IMR-90 (cell line): ENCODE measurements at regions of chr21 and their contacts with region 1.

Region 1: DNA sequence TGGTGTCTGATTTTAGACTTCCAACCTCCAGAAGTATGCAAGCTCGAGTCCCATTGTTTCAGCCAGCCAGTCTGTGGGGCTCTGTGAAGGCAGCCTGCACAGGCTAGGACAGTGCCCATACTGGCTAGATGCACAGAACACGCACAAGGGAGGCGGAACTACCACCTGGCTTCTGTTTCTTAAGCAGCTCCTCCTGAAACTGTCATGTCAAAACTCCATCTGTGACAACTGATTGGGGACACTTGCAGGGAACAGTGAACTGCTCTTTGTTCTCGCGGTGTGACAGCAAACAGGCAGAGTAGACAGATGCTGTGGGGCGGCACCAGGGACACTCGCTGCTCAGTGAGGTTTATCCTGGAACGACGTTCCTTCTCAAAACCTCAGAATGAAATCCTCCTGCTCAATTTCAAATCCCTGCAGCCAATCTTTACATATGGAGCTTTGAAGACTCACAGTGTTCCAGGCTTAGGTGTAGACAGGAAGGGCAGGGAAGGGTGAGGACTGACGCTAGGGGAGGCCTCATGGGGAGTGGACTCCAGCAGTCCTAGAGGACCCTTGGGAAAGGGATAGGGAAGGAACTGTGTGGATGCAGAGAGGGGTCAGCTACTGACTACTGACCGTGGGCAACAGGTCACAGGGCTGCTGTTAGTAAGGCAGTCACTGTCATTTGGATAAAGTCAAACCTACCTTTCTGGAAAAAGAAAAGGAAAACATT is 73.8 kb downstream of the ERG start:
- DNase-seq: no peak
- ATAC-seq: no peak
- H3K4me3 ChIP-seq: no peak overlapping the region
- H3K27ac ChIP-seq: no peak overlapping the region
- H3K4me1 ChIP-seq: no peaks in the 10 kb centered on the region
- H3K27me3 ChIP-seq: peaks cover 5% of the 10 kb centered on the region
- CTCF ChIP-seq: no peak
- POLR2A ChIP-seq: no peak
- RAD21 ChIP-seq: no peak

Region 2: DNA sequence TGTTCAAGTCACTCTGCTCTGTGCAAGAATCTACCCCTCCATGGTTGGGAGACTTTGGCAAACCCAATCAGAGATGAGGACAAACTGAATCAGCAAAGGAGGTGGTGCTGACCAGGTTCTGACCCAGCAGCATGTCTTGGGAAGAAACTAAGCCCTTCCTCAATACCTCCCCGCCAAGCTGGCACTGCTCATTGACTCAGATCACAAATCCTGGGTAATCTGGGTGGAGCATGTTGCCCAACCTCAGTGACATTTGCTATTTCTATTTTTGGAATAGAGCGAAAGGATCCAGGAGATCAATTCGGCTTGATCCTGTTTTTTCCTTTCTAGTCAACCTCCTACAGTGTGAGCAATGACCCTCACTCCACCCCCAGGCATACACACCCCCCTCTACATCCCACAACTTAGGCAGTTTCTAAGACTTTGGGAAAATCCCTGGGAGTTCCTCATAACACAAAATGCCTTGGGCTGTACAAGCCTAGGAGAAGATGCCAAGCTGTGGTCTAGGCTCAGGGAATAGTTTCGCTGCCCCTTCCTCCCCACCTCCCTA is 341.5 kb before region 1 on chr21:
- CTCF ChIA-PET with region 1: no interaction called
- POLR2A ChIA-PET with region 1: no interaction called
- dilution Hi-C with region 1: no loop called
- in situ Hi-C with region 1: no loop called
- intact Hi-C with region 1: no loop called
- DNase-seq: no peak
- ATAC-seq: no peak
- H3K4me3 ChIP-seq: no peak overlapping the region
- H3K27ac ChIP-seq: no peak overlapping the region
- H3K4me1 ChIP-seq: no peaks in the 10 kb centered on the region
- H3K27me3 ChIP-seq: peaks cover 9% of the 10 kb centered on the region
- CTCF ChIP-seq: no peak
- POLR2A ChIP-seq: no peak
- RAD21 ChIP-seq: no peak

Region 3: GRCh38 chr21:38404168-38404567 is 20.3 kb before region 1 on chr21:
- CTCF ChIA-PET with region 1: no interaction called
- POLR2A ChIA-PET with region 1: no interaction called
- dilution Hi-C with region 1: no loop called
- in situ Hi-C with region 1: no loop called
- intact Hi-C with region 1: loop called (anchors 1 kb)
- DNase-seq: no peak
- ATAC-seq: no peak
- H3K4me3 ChIP-seq: no peak overlapping the region
- H3K27ac ChIP-seq: no peak overlapping the region
- H3K4me1 ChIP-seq: no peaks in the 10 kb centered on the region
- H3K27me3 ChIP-seq: peaks cover 26% of the 10 kb centered on the region
- CTCF ChIP-seq: no peak
- POLR2A ChIP-seq: no peak
- RAD21 ChIP-seq: no peak